Activated CD4-positive, alpha-beta T cell treated with anti-CD3 and anti-CD28 coated beads, Interleukin-2, amount 10 ng/mL, durations not matched to agents 24 days and 14 days (primary cell): ENCODE measurements at regions of chr5 and their contacts with region 1.

Region 1: GRCh38 chr5:110757118-110757729 is 18.4 kb downstream of the SLC25A46 start:
- DNase-seq: peak; percentile 81
- H3K4me3 Mint-ChIP-seq: no peak overlapping the region
- H3K27ac Mint-ChIP-seq: no peak overlapping the region
- H3K4me1 Mint-ChIP-seq: peaks cover 28% of the 10 kb centered on the region
- H3K27me3 Mint-ChIP-seq: no peaks in the 10 kb centered on the region

Region 2: DNA sequence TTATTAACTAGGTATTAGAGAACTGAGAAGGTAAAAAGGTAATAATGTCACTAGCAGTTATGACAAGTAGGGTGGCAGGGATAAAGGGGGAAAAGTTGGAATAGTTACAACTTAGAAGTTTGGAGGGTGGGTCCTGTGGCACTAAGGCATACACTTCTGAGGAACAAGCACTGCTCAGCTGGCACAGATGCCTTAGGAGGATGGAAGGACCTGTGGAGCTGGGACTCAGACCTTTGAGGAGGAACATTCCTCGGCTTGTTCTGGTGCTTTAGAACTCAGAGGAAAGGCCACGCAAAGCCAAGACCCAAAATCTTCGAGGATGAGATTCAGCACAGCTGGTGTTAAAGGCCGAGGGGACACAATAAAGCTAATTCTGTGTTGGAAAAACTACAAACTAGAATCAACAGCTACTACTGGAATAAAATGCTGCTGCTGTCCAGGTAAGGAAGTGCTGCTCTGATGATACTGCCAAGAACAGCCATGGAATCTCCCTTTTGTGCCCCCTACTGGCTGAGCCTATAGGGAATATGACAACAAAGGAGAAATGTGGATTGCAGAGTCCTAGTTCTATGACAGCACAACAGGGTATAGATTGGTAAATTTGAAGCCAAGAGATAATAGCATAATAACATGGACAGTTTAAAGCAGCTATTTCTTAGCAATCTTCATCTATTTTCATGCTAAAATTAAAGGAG is 108.3 kb after region 1 on chr5:
- intact Hi-C with region 1: loop called (anchors 5 kb)
- DNase-seq: peak; percentile 59
- H3K4me3 Mint-ChIP-seq: no peak overlapping the region
- H3K27ac Mint-ChIP-seq: no peak overlapping the region
- H3K4me1 Mint-ChIP-seq: no peaks in the 10 kb centered on the region
- H3K27me3 Mint-ChIP-seq: no peaks in the 10 kb centered on the region

Region 3: GRCh38 chr5:111072949-111073682 is 315.9 kb after region 1 on chr5:
- intact Hi-C with region 1: loop called (anchors 5 kb)
- DNase-seq: peak; percentile 88
- H3K4me3 Mint-ChIP-seq: peak overlapping the region; percentile 93
- H3K27ac Mint-ChIP-seq: no peak overlapping the region
- H3K4me1 Mint-ChIP-seq: peaks cover 22% of the 10 kb centered on the region
- H3K27me3 Mint-ChIP-seq: peaks cover 71% of the 10 kb centered on the region

Region 4: GRCh38 chr5:111223889-111224563 is 466.8 kb after region 1 on chr5 and contains the start of gene CAMK4:
- intact Hi-C with region 1: loop called (anchors 10 kb)
- DNase-seq: peak; percentile 94
- H3K4me3 Mint-ChIP-seq: peak within 1 kb of the TSS; percentile 97
- H3K27ac Mint-ChIP-seq: peak within 1 kb of the TSS; percentile 95
- H3K4me1 Mint-ChIP-seq: peaks cover 35% of the 10 kb centered on the region
- H3K27me3 Mint-ChIP-seq: peaks cover 2% of the 10 kb centered on the region
- total RNA-seq, gene CAMK4: 47.7 and 49.5 TPM in 2 replicates

Region 5: DNA sequence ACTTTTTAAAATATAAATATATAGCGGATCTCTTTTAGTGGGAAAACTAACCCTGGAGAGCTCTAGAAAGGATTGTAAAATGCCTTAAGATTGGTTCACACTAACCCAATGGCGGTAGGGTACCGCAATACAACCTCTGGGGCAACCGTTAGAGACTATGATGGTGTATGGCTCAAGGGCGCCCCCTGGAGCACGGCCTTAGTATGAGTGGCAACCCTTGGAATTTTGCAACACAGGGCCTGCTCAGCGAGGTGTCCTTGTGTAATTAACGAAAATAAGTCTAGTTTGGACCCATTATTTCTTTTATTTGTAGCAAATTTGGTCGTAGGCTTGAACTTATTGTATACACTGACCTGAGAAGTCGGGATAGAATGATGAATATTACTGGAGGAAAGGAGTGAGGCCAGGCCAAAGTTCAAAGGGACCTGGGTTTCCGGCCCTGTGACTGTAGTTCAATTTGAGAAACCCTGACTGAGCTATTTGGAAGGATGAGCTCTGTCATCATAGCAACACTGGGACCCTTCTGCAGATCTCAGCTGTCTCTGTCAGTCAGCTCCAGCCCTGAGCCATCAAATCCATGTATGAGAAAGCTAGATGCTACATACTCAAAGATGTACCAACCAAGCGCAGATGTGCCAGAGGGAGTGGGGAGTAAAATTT is 521.8 kb after region 1 on chr5:
- intact Hi-C with region 1: loop called (anchors 10 kb)
- DNase-seq: peak; percentile 95
- H3K4me3 Mint-ChIP-seq: no peak overlapping the region
- H3K27ac Mint-ChIP-seq: no peak overlapping the region
- H3K4me1 Mint-ChIP-seq: peaks cover 24% of the 10 kb centered on the region
- H3K27me3 Mint-ChIP-seq: no peaks in the 10 kb centered on the region